ENCODE measurements at regions of chr15 and their contacts with region 1.

Region 1: DNA sequence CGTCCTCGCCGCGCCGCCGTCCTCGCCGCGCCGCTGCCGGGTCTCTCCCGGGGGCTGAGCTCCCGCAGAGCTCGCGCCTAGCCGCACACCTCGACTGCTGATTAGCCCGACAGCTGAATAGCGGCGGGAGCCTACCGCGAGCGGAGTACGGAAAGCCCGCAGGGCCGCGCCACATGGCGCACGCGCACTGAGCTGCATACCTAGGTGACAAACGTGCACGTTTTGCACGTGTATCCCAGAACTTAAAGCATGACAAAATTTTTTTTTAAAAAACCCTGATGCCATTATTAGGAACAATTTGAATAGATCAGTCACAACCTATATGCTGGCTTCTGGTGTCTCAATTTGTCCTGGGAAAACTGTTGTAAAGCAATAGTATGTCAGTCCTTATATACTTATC is at the start of gene GOLGA8A:
- DNase-seq: peak; percentile 80
- H3K4me3 Mint-ChIP-seq: peak within 1 kb of the TSS; percentile 91
- H3K27ac Mint-ChIP-seq: peak within 1 kb of the TSS; percentile 98
- H3K4me1 Mint-ChIP-seq: peaks cover 29% of the 10 kb centered on the region
- H3K27me3 Mint-ChIP-seq: peaks cover 14% of the 10 kb centered on the region
- total RNA-seq, gene GOLGA8A: 264 and 275 TPM in 2 replicates

Region 2: DNA sequence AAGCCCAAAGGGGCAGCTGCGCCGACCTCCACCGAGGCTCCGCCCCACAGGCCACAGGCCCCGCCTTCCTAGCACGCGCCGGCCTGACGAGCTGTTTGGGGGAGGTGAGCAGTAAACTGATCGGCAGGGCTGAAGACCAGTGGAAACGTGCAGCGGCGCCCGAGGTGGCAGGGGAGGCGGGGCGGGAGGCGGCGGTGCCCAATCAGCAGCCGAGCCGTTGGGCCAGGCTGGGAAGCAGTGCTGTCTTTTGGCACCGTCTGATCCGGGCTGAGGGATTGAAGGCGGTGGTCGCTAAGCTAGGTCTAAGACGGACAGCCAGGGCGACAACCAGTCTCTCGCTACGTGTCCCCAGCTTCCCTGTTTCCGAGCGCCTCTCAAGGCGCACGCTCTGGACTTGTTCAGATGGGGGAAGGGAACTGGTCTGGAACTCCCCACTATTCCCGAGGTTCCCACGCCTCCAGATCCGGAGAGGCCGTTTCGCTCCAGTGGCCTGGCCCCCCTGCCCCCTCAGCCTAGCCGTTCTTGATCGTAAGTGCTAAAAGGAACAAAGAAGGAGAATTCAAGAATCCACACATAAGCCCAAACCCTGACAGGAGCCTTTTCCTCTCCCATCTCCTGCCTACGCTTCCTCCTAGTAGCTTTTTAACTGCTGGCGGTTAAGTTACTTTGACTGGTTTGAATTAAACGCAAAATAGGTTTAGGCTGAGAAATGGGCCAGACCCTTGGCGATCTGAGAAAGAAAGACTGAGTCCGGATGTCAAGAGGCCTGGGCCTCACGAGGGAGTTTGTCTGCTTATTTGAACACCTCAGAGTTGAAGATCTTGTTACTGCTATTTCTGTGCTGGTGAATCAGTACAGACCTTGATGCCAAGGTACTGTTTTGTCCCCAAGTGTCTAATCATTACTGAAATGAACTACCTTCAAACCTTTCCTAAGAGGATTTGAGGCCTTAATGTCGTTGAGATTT is 1242.7 kb before region 1 on chr15 and contains the start of gene FMN1:
- intact Hi-C with region 1: loop called (anchors 10 kb)
- DNase-seq: peak; percentile 85
- H3K4me3 Mint-ChIP-seq: peak within 1 kb of the TSS; percentile 81
- H3K27ac Mint-ChIP-seq: peak within 1 kb of the TSS; percentile 38
- H3K4me1 Mint-ChIP-seq: peaks cover 19% of the 10 kb centered on the region
- H3K27me3 Mint-ChIP-seq: peaks cover 36% of the 10 kb centered on the region
- total RNA-seq, gene FMN1: 0.03 TPM in 1 of 2 replicates, not detected in the other

Region 3: DNA sequence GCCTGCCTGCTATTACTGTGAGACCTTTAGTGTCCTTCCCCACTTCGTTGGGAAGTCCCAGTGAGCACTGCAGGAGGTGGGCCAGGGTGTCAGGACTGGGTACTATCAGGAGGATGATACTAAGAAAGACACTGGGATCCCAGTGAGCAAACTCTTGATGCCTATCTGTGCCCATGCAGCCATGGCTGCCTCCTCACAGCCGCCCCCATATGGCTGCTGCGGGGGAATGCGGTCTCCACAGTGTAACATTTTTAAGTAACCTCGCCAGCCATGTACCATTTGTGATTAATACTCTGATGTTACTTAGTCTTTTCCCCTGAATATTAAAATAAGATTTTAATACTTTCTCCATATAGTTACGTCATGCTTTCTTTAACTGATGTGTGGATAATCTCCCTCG is 814.7 kb before region 1 on chr15:
- intact Hi-C with region 1: no loop called
- DNase-seq: no peak
- H3K4me3 Mint-ChIP-seq: no peak overlapping the region
- H3K27ac Mint-ChIP-seq: no peak overlapping the region
- H3K4me1 Mint-ChIP-seq: no peaks in the 10 kb centered on the region
- H3K27me3 Mint-ChIP-seq: no peaks in the 10 kb centered on the region

Region 4: GRCh38 chr15:34014556-34014955 is 423.1 kb before region 1 on chr15:
- intact Hi-C with region 1: no loop called
- DNase-seq: no peak
- H3K4me3 Mint-ChIP-seq: no peak overlapping the region
- H3K27ac Mint-ChIP-seq: no peak overlapping the region
- H3K4me1 Mint-ChIP-seq: peaks cover 22% of the 10 kb centered on the region
- H3K27me3 Mint-ChIP-seq: peaks cover 2% of the 10 kb centered on the region

Region 5: DNA sequence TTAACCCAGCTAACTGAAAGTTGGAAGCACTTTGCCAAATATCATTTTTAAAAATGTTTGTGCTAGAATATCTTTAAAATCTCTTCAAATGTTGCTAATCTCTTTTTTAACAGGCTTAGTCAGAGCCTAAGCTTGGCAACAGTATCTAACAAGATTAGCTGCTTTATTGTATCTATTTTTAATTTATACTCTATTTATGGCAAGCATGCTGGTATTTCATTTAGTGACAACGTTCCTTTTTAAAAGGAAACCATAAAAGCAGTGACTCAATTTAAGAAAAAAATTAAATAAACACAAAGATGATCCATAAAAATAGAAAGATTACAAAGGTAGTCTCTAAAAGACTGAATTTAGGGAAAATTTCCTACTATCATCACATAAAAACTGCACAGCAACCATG is 140.6 kb before region 1 on chr15:
- intact Hi-C with region 1: no loop called
- DNase-seq: no peak
- H3K4me3 Mint-ChIP-seq: no peak overlapping the region
- H3K27ac Mint-ChIP-seq: no peak overlapping the region
- H3K4me1 Mint-ChIP-seq: peaks cover 13% of the 10 kb centered on the region
- H3K27me3 Mint-ChIP-seq: no peaks in the 10 kb centered on the region

Region 6: DNA sequence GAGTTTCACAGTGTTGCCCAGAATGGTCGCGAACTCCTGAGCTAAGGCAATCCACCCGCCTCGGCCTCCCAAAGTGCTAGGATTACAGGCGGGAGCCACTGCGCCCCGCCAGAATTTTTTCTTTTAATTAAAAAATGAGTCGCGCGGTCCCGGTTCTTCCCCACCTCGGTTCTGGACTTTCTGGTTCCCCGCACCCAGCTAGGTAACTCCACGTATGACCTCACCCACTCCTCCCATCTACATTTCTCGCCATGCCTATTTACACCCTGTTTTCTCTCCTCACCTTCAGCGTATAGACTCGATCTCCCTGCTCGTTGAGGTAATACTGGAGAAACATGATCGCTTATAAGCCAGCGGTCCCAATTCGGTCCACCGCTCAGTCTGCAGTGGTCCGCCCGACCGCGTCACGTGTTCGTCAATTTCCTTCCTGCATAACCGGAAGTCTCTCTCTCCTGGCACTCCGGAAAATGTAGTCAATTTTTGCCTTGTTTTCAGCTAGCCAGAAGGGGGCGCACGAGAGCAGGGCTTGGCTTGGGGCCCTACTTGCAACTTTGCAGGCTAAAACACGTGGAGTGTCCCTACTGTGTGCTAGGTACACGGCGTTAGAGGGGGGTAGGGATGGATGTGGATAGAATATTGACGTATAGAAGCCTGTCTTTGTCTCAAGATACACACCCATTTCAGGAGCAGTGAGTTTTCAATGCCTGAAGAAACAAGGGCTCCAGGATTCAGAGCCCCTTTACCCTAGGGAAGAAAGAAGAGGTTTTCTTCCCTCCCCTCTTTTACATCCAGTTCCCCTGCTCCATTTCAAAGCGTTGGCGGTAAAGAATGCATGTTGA is 94.7 kb before region 1 on chr15 and contains the starts of genes NOP10 and NUTM1:
- intact Hi-C with region 1: loop called (anchors 1 kb)
- DNase-seq: peak; percentile 91
- H3K4me3 Mint-ChIP-seq: no peak within 1 kb of the TSS
- H3K27ac Mint-ChIP-seq: peak within 1 kb of the TSS; percentile 88
- H3K4me1 Mint-ChIP-seq: peaks cover 26% of the 10 kb centered on the region
- H3K27me3 Mint-ChIP-seq: no peaks in the 10 kb centered on the region
- total RNA-seq, gene NOP10: 257 and 267 TPM in 2 replicates
- total RNA-seq, gene NUTM1: not detected in 2 replicates

Region 7: DNA sequence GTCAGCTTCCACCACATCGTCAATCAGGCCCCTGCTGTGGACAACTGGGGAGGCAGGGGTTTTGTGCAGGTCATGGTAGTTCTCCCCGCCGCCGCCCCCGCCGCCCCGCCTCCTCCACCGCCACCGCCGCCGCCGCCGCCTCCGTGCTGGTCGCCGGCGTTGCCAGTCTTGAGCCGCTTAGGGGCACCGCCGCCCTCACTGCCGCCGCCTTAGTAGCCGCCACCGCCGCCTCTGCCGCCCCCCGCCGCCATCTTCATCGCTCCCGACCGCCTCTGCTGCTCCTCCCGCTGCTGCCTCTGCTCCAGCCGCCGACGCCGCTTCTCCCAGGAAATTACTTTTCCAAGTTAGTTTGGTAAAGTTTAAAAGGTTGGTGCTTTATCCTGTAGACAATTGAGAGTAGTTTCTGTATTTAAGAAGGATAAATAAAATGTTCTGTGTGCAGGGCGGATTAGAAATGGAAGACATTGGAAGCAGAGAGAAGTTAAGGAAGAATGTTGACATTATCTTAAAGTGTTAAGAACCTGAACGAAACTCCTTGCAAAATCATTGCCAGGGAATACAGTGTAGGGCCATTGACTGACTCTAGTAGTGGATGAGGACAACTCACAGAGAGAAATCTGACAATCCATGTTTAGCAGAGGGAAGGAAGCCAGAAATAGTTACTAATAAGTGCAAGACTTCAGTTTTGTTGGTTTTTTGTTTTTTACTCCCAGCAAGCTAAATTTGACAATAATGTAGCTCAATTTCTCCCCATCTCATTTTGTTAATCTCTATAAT is 52.9 kb after region 1 on chr15:
- intact Hi-C with region 1: loop called (anchors 5 kb)
- DNase-seq: no peak
- H3K4me3 Mint-ChIP-seq: no peak overlapping the region
- H3K27ac Mint-ChIP-seq: no peak overlapping the region
- H3K4me1 Mint-ChIP-seq: peaks cover 9% of the 10 kb centered on the region
- H3K27me3 Mint-ChIP-seq: peaks cover 66% of the 10 kb centered on the region

Measured in activated T-helper 1 cell treated with anti-CD3 and anti-CD28 coated beads, Interleukin-12 subunit alpha, Interleukin-12 subunit beta, Interleukin-2, Interleukin-4 antibody, amounts not matched to agents 30 ng/mL and 10 ng/mL and 1 ng/mL, durations not matched to agents 14 hours and 24 hours and 36 hours (primary cell).